Sigmoid colon (tissue), 7 donors: ENCODE measurements at regions of chrX and their contacts with region 1.

Region 1: DNA sequence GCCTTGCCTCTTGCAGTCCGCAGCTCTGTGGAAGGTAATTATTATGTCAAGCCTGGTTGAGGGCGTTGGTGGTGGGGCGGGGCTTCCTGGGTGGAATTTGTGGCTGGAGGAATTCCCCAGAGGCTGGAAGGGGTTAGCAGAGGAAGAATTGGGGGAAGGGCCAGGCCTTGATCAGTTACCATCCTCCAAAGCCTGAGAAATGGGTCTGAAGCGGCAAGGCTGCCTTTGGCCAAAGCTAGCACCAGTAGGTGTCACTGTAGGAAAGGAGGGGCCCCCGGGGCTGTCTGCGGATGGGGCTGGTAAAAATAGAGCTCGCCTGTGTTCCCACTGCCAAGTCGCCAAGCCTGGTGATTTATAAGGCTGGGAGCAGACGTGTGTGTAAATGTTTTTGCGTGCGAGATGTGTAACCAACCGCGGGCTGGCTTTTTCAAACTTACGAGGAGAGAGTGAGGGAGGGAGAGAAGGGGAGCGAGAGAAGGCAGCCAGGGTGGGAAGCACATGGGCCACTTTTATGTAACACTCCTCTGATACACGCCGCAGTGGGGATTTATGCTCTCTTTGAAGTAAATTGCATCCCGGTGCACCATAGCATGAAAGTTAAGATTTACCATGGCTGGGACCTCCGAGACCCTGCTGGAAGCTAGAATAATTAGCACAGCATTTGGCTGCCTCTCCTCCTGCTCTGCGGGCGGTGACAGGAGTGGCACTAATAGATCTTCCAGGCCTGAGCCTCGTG is 366.9 kb downstream of the BCOR start:
- DNase-seq: peak; percentile 94
- H3K4me3 ChIP-seq: no peak overlapping the region
- H3K27ac ChIP-seq: peak overlapping the region in 3 of 4 donors; percentile 63 to 67 (median 65)
- H3K4me1 ChIP-seq: peaks cover 0 to 37% (median 18%) of the 10 kb centered on the region in 4 donors
- H3K27me3 ChIP-seq: no peaks in the 10 kb centered on the region
- CTCF ChIP-seq: peak in 3 of 4 experiments; percentile 4 to 51 (median 21)
- EP300 ChIP-seq: peak; percentile 17 to 65 (median 37)
- POLR2A ChIP-seq: no peak

Region 2: GRCh38 chrX:39688576-39689375 is 42.1 kb before region 1 on chrX:
- intact Hi-C with region 1: no loop called
- DNase-seq: peak; percentile 76
- H3K4me3 ChIP-seq: peak overlapping the region; percentile 20 to 54 (median 46)
- H3K27ac ChIP-seq: peak overlapping the region; percentile 54 to 71 (median 65)
- H3K4me1 ChIP-seq: peaks cover 0 to 18% (median 11%) of the 10 kb centered on the region in 4 donors
- H3K27me3 ChIP-seq: peaks cover 0 to 8% (median 0%) of the 10 kb centered on the region in 3 donors
- CTCF ChIP-seq: no peak
- EP300 ChIP-seq: no peak
- POLR2A ChIP-seq: no peak

Region 3: DNA sequence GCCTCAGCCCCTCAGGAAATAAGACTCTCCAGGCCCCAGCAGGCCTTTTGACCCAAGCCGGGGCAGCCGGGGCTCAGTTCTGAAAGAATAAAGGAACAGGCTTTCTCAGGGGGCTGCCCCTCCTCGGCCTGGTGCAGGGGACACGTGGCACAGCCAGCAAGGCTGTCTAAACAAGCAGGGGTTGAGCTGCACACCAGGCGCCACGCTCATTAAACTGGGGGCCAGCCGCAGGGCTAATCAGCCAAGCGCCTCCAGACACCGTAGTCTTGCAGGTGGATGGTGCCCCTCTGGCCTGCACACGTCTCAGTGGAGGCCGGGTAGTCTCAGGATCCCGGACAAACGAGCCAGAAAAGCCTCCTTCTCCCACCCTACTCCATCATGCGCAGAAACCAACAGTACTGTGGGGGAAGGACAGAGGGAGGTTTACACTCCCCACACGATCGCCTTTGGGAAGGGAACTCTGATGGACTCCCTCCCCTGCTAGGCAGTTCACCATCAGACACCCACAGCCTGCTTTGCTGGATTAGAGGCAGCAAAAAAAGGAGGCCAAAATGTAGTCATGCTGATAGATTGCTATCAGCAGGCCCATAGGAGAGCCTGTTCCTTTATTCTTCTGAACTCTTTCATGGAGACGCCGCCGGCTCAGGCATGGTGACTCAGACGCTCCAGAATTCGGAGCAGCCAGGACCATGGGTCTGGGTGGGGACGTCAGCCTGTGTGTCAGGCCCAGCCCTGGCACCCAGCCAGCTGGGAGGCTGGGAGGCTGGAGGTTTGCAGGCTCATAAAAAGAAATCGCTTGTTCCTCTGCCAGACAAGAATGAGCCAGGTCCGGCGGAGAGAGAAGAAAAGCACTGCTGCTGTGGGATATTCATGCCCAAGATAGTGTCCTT is 24.6 kb after region 1 on chrX:
- intact Hi-C with region 1: loop called (anchors 2 kb)
- DNase-seq: peak; percentile 96
- H3K4me3 ChIP-seq: no peak overlapping the region
- H3K27ac ChIP-seq: peak overlapping the region; percentile 79 to 85 (median 81)
- H3K4me1 ChIP-seq: peaks cover 0 to 53% (median 40%) of the 10 kb centered on the region in 4 donors
- H3K27me3 ChIP-seq: no peaks in the 10 kb centered on the region
- CTCF ChIP-seq: no peak
- EP300 ChIP-seq: peak in 2 of 4 donors; percentile 41 to 76
- POLR2A ChIP-seq: no peak

Region 4: DNA sequence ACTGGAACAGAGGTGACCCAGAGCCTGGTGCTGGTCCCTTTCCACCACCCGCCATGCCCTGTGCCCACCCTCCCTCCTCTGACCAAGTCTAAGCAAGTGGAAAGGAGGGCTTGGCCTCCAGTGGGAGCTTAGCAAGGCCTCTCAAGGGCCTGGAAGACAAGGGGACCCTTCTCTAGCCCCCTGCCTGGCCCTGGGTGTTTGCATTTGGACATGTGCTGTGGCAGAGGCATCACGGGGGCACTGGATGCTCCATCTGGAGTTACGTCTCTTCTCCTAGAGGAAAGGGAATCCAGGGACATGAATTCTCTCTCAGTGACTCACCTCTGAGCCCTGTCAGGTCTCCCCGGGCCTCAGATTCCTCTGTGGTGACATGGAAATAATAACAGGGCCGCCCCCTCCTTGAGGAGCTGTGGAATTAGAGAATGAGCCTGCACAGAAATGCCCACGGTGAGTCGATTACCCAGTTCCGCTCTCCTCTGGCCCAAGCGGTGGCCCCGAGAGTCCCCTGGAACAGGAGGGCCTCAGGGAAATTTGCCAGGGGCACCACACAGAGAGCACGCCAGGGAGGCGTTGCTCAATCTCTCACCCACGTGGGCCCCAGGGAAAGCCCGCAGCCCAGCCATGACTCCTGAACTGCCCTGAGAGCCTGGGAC is 177.3 kb after region 1 on chrX:
- intact Hi-C with region 1: loop called (anchors 5 kb)
- DNase-seq: peak; percentile 86
- H3K4me3 ChIP-seq: no peak overlapping the region
- H3K27ac ChIP-seq: peak overlapping the region; percentile 71 to 75 (median 72)
- H3K4me1 ChIP-seq: peaks cover 0 to 38% (median 19%) of the 10 kb centered on the region in 4 donors
- H3K27me3 ChIP-seq: peaks cover 0 to 2% (median 0%) of the 10 kb centered on the region in 3 donors
- CTCF ChIP-seq: no peak
- EP300 ChIP-seq: no peak
- POLR2A ChIP-seq: no peak

Region 5: DNA sequence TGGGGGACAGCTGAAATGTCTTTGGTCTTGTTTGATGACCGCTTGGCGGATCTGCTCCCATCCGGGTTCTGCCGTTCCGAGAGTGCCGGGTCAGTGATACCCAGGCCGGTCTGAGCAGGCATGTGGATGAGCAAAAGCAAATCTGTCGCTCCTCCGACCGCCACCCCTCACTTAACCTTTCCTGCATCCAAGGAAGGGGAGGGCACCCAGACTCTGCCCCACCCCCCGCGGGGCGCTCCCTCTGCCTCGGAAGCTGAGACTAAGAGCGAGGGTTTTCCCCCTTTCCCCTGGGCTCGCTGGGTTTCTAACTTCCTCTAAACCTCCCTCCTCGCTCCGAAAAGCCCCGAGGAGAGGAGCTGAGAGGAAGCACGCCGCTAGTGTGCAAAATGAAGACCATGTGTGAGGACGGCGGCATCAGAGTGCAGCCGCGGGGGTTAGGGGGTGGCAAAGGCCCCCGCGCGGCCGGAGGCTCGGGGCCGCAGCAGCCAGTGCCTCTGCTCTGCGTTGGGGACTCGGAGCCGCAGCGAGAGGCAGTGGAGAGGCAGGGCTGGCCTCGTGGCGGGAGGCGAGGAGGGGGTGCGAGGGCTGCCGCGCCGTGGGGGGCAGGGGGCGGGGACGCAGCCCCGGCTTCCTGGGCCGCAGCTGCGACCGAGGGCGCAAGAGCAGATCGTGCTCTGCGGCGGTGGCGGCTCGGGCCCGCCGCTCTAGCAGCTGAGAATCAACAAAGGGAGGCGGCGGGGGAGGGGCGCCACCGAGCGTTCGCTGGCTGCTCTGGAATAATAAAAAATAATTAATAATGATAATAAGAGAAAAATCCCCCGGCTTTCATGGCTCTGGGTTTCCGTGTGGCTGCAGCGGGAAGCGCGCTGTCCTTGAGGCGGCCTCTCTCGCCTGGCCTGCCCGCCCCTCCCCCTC is 422.8 kb after region 1 on chrX:
- intact Hi-C with region 1: loop called (anchors 5 kb)
- DNase-seq: peak; percentile 73
- H3K4me3 ChIP-seq: peak overlapping the region; percentile 19 to 53 (median 48)
- H3K27ac ChIP-seq: peak overlapping the region; percentile 71 to 82 (median 76)
- H3K4me1 ChIP-seq: peaks cover 0 to 51% (median 16%) of the 10 kb centered on the region in 4 donors
- H3K27me3 ChIP-seq: peaks cover 0 to 14% (median 0%) of the 10 kb centered on the region in 3 donors
- CTCF ChIP-seq: no peak
- EP300 ChIP-seq: no peak
- POLR2A ChIP-seq: no peak

Region 6: GRCh38 chrX:40266490-40267333 is 535.9 kb after region 1 on chrX:
- intact Hi-C with region 1: loop called (anchors 2 kb)
- DNase-seq: peak; percentile 83
- H3K4me3 ChIP-seq: peak overlapping the region; percentile 22 to 50 (median 46)
- H3K27ac ChIP-seq: peak overlapping the region; percentile 47 to 74 (median 67)
- H3K4me1 ChIP-seq: peaks cover 0 to 15% (median 4%) of the 10 kb centered on the region in 4 donors
- H3K27me3 ChIP-seq: peaks cover 0 to 3% (median 0%) of the 10 kb centered on the region in 3 donors
- CTCF ChIP-seq: peak in 3 of 4 experiments; percentile 52 to 60 (median 55)
- EP300 ChIP-seq: no peak
- POLR2A ChIP-seq: no peak